ENCODE measurements at regions of chr20 and their contacts with region 1.

Region 1: GRCh38 chr20:22691369-22692118 is 107.2 kb upstream of the FOXA2 start:
- DNase-seq: peak; percentile 65 to 87 (median 78)
- H3K4me3 ChIP-seq: peak overlapping the region in 31 of 59 donors; percentile 3 to 48 (median 28)
- H3K27ac ChIP-seq: peak overlapping the region in 11 of 59 donors; percentile 31 to 62 (median 45)
- H3K27me3 ChIP-seq: peaks cover 0 to 7% (median 0%) of the 10 kb centered on the region in 45 donors
- CTCF ChIP-seq: peak; percentile 81 to 99 (median 93)

Region 2: DNA sequence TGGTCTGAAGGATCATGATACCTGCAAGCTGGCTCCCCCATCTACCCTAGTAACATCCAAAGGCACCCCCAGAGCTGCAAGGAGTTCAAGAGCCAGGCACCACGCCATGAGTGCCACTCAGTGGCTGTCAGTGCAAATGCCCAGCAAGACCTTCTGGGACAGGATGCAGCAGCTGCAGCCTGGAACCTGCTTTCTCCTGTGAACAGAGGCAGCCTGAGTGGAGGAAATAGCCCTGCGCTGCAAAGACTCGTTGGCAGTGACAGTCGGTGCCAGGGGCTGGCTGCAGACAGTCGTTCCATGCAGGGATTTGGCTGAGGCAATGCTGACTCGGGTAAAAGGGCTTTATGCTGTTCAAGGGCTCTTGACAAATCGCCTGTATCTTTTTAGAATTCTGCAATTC is 327.9 kb after region 1 on chr20:
- intact Hi-C with region 1: loop called in 1 of 2 experiments (anchors 10 kb)
- DNase-seq: peak in 9 of 10 donors; percentile 35 to 69 (median 63)
- H3K4me3 ChIP-seq: peak overlapping the region in 2 of 59 donors; percentile 1 to 28
- H3K27ac ChIP-seq: peak overlapping the region in 39 of 59 donors; percentile 0 to 85 (median 34)
- H3K27me3 ChIP-seq: no peaks in the 10 kb centered on the region
- CTCF ChIP-seq: no peak

Region 3: GRCh38 chr20:23061734-23062561 is 370.4 kb after region 1 on chr20:
- intact Hi-C with region 1: loop called in 1 of 2 experiments (anchors 10 kb)
- DNase-seq: peak in 1 of 10 donors; percentile 55
- H3K4me3 ChIP-seq: no peak overlapping the region
- H3K27ac ChIP-seq: peak overlapping the region in 27 of 59 donors; percentile 3 to 75 (median 35)
- H3K27me3 ChIP-seq: no peaks in the 10 kb centered on the region
- CTCF ChIP-seq: peak in 37 of 56 donors; percentile 10 to 54 (median 31)

Region 4: GRCh38 chr20:23245553-23246181 is 554.1 kb after region 1 on chr20:
- intact Hi-C with region 1: loop called in 1 of 2 experiments (anchors 5 kb)
- DNase-seq: peak in 4 of 10 donors; percentile 27 to 54 (median 35)
- H3K4me3 ChIP-seq: no peak overlapping the region
- H3K27ac ChIP-seq: no peak overlapping the region
- H3K27me3 ChIP-seq: peaks cover 0 to 6% (median 0%) of the 10 kb centered on the region in 45 donors
- CTCF ChIP-seq: peak in 43 of 56 donors; percentile 12 to 48 (median 32)

Region 5: DNA sequence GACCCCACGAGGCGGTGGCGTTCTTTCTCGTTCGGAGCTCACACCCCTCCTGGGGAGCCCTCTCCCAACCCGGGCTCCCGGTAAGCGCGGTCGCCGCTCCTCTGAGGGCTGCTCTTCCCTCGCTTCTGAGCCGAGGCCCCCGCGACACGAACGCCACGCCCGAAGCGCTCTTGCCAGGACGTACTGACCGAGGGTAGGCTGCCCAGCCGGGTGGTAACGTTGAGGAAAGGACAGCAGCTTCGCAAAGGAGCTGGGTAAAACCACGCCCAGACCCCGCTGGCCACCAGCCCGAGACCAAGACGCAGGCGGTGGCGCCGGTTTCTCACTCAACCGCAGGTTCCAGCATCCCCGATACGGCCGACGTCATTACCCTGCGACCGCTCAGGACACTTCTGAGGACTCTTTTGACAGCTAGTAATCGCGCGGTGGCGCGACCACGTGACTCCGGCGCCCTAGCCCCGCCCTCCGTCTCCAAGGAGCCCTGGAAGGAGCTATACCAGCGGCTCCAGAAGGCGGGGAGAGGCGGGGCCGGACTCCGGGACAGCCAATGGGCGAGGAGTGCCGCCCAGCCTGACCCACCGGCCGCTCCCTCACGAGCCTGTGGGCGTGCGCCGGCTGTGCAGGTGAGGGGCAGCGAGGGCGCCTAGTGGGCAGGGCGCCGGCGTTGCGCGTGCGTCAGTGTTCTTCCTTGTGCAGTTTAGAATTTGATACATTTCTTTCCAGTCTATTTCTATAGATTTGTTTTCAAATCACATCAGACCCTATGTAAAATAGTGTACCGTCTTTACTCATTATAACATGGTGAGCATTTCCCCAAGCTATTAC is 666.4 kb after region 1 on chr20:
- intact Hi-C with region 1: loop called in 1 of 2 experiments (anchors 5 kb)
- DNase-seq: peak; percentile 99 to 100 (median 100)
- H3K4me3 ChIP-seq: peak overlapping the region; percentile 47 to 97 (median 77)
- H3K27ac ChIP-seq: peak overlapping the region; percentile 63 to 100 (median 95)
- H3K27me3 ChIP-seq: no peaks in the 10 kb centered on the region
- CTCF ChIP-seq: peak in 40 of 56 donors; percentile 3 to 58 (median 26)